Testis (tissue), 5 donors: ENCODE measurements at regions of chr13 and their contacts with region 1.

Region 1: GRCh38 chr13:112942689-112943308 is 26.2 kb upstream of the MCF2L start:
- DNase-seq: peak; percentile 99
- H3K4me3 ChIP-seq: peak overlapping the region; percentile 56
- H3K27ac ChIP-seq: peak overlapping the region in 1 of 2 donors; percentile 57
- H3K4me1 ChIP-seq: no peaks in the 10 kb centered on the region
- H3K27me3 ChIP-seq: no peaks in the 10 kb centered on the region
- CTCF ChIP-seq: peak; percentile 86 to 89 (median 87)
- POLR2A ChIP-seq: no peak

Region 2: GRCh38 chr13:112767506-112768471 is 175.0 kb before region 1 on chr13:
- intact Hi-C with region 1: no loop called
- DNase-seq: no peak
- H3K4me3 ChIP-seq: no peak overlapping the region
- H3K27ac ChIP-seq: no peak overlapping the region
- H3K4me1 ChIP-seq: peaks cover 7% of the 10 kb centered on the region
- H3K27me3 ChIP-seq: no peaks in the 10 kb centered on the region
- CTCF ChIP-seq: no peak
- POLR2A ChIP-seq: no peak

Region 3: GRCh38 chr13:112821340-112822055 is 121.3 kb before region 1 on chr13:
- intact Hi-C with region 1: loop called (anchors 5 kb)
- DNase-seq: no peak
- H3K4me3 ChIP-seq: no peak overlapping the region
- H3K27ac ChIP-seq: no peak overlapping the region
- H3K4me1 ChIP-seq: no peaks in the 10 kb centered on the region
- H3K27me3 ChIP-seq: no peaks in the 10 kb centered on the region
- CTCF ChIP-seq: no peak
- POLR2A ChIP-seq: no peak

Region 4: DNA sequence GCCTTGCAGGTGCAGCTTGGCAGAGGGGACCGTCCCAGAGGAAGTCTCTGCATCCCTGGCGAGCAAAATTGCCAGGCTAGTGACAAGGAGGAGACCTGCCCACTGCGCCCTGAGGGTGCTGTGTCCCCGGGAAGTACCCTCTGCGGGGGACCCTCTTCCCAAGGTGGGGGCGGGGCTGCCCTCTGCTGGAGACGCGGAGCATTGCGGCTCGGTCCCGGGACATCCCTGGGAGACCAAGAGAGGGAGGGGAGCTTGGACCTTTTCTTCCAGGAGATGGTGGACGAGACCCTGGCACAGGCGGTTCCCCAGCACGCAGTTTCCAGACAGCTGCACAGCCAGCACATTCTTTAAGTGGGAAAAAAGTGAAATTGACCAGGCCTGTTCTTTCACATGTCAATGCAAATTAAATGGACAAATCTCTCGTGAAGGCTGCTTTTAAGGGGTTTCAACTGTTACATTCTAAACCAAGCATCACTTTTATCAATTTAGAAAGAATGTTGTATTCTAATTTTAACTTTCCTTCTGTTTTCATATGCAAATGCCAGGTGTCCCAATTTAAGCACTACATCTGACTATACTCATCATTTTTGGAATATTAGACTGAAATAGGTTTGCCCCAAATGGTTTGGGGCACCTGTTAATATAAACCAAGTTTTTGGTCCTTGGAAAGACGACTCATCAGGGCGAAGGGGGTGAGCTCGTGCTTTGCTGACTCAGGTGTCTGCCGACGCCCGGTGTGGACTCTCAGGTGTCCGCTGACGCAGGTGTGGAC is 86.9 kb after region 1 on chr13:
- intact Hi-C with region 1: loop called (anchors 10 kb)
- DNase-seq: peak; percentile 75
- H3K4me3 ChIP-seq: no peak overlapping the region
- H3K27ac ChIP-seq: no peak overlapping the region
- H3K4me1 ChIP-seq: no peaks in the 10 kb centered on the region
- H3K27me3 ChIP-seq: no peaks in the 10 kb centered on the region
- CTCF ChIP-seq: peak; percentile 68 to 84 (median 73)
- POLR2A ChIP-seq: no peak